Lower leg skin (tissue), 4 donors: ENCODE measurements at regions of chr2 and their contacts with region 1.

Region 1: GRCh38 chr2:70340921-70341765 is 39.3 kb upstream of the FAM136A start:
- DNase-seq: peak in 1 of 2 donors; percentile 20
- H3K4me3 ChIP-seq: no peak overlapping the region
- CTCF ChIP-seq: peak in 1 of 3 donors; percentile 16
- POLR2A ChIP-seq: no peak

Region 2: GRCh38 chr2:70357684-70358071 is 16.5 kb after region 1 on chr2:
- intact Hi-C with region 1: no loop called
- DNase-seq: no peak
- H3K4me3 ChIP-seq: no peak overlapping the region
- CTCF ChIP-seq: no peak
- POLR2A ChIP-seq: no peak

Region 3: DNA sequence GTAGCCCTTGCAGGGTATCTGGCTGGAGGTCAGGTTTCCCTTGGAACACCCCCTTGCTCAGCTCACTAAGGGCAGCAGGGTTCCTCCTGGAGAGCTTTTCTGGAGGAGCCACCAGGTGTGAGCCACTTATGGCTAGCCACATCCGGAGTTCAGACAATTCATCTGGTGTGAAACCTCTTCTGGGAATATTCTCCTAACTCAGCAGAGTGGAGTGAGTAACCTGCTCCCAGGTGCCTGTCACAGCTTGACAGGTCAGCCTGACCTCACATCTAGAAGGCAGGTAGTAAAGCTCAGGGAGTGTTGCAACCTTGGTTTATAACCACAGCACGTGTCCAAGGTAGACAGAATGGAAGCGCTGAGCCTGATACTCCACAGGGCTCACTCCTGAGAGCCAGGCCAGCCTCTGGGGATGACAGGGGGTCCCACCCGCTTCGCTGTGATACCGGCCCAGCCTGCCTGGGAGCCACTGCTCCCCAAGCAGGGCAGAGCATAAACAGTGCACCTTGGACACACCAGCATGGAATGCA is 275.1 kb after region 1 on chr2:
- intact Hi-C with region 1: loop called (anchors 2 kb)
- DNase-seq: no peak
- H3K4me3 ChIP-seq: no peak overlapping the region
- CTCF ChIP-seq: no peak
- POLR2A ChIP-seq: no peak

Region 4: DNA sequence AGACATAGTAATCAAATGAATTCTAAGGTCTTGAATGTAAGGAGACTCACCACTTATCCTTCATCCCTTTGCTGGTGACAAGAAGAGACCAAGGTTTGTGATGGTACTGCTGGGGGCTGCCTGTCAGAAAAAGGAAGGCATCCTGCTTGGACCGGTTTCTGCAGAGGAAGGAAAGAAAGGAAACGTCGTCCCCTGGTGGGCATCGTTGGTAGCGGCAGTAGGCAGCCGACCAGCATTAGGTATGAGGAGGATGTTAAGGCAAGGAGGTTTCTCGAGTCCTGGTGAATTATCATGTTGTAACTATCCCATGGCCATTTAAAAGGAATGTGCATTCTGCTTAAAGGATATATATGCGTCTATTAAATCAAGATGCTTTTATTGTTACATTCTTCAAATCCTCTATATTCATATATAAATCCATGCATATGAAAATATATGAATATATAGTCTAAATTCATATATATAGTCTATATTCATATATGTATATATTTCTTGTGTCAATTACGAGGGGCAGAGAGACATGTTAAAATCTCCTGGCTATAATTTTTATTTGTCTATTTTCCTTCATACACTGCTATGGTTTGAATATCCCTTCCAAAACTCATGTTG is 306.8 kb after region 1 on chr2:
- intact Hi-C with region 1: loop called (anchors 10 kb)
- DNase-seq: peak in 1 of 2 donors; percentile 30
- H3K4me3 ChIP-seq: no peak overlapping the region
- CTCF ChIP-seq: peak in 2 of 3 donors; percentile 38 to 77
- POLR2A ChIP-seq: no peak

Region 5: GRCh38 chr2:70785137-70785911 is 444.2 kb after region 1 on chr2:
- intact Hi-C with region 1: no loop called
- DNase-seq: no peak
- H3K4me3 ChIP-seq: no peak overlapping the region
- CTCF ChIP-seq: no peak
- POLR2A ChIP-seq: no peak